Left ventricle myocardium superior (tissue), 1 donor: ENCODE measurements at regions of chr13 and their contacts with region 1.

Region 1: DNA sequence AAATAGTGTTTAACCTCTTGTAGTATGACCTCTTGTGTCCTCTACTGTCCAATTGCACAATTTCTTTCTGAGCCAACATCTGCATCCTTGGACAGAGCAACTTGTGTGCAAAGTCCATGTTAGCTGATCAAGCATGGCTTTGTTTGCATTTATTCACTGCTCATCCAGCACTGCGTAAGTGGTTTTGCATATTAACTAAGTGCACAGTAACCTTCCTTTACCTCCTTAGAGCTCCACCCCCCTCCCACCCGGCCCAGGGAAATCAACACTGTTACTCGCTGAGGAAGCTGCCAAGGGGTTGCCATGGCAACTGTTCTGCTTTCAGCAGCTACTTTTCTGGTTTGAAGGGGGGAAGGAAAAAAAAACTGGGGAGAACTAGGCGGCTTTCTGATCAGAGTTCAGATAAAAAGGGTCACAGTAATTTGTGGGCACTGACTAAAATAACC is 153.5 kb upstream of the KLF12 start:
- DNase-seq: peak; percentile 81
- ATAC-seq: peak; percentile 53

Region 2: GRCh38 chr13:73765651-73766384 is 521.9 kb before region 1 on chr13:
- intact Hi-C with region 1: loop called (anchors 10 kb)
- DNase-seq: peak; percentile 89
- ATAC-seq: peak; percentile 87

Region 3: GRCh38 chr13:73832128-73832588 is 455.6 kb before region 1 on chr13:
- intact Hi-C with region 1: loop called (anchors 5 kb)
- DNase-seq: no peak
- ATAC-seq: no peak

Region 4: DNA sequence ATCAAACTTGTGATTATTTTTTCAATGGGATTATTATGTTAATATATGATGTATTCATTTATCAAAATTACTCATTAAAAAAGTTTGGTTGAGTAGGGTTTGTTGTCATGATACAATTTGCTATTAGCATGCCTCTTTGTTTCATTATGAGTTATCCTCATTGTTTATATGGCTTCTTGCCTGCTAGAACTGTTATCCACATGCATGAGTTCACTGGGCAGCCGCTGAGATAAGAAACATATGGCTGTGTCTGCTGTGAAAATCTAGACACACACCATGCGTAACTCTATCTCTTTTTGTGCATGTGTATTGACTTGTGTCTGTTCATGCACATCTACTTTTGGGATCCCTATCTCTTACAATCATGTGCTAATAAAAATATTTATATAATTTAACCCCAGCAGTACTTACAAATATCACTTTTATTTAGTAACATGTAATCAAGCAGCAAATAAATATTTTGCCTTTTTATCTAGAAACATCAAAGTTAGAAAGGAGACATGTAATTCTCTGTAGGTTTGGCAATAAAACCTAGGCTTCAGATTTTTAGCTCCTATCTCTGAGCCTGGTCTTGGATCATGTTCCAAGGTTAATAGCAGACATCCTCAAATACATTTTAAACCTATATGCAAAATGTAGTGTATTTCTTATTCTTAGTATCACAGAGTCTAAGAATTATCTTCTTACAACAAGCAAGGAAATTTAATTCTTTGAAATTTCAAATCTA is 142.3 kb before region 1 on chr13:
- intact Hi-C with region 1: loop called (anchors 10 kb)
- DNase-seq: no peak
- ATAC-seq: peak; percentile 52

Region 5: DNA sequence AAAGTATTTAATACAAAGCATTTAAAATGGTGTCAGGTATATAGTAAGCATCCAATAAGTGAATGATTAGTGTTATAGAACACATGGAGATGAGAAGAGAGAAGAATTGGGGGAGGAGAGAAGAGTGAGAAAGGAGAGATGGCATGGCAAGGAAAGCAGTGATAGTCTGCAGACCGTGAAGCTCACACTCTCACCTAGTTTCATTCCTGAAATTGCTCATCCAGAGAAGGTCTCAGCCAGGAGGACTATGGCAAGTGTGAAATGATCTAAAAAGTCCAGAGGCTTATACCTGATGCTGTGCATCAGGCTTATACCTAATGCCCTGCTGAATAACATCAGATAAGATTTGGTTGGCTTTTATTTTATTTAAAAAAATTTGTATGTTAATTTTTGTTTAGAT is 198.0 kb after region 1 on chr13:
- intact Hi-C with region 1: no loop called
- DNase-seq: no peak
- ATAC-seq: no peak